ENCODE measurements at regions of chr3 and their contacts with region 1.

Region 1: DNA sequence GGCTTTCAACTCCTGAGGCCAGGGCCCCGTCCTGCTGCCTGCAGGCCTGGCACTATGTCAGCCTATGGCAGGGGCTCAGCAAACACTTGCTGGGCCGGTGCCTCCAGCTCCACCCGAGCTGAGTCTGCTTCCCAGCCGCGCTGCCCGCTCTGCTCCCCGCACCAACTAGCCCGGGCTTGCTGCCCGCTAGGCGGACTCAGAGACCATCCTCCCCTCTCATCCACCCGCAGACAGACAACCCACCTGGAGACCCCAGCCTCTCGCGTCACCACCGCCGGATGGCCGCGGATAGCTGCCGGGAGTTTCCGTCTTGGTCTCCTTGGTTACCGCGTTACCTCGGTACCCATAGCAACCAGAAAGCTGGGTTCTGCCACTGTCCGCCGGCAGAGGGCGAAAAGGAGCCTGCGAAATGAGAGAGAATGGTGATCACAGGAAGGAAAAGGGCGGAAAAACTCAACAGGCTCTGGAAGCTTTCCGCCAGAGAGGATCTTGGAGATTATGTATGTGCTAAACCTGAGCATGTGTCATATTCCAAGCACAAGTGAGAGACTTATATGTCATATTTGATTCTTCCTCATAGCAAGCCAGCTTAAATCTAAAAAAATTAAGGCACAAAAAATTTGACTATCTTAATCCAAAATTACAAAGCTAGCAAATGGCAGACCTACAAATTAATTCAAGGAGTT is at the start of gene ZBBX:
- DNase-seq: peak; percentile 95
- ATAC-seq: peak; percentile 99
- H3K4me3 Mint-ChIP-seq: peak within 1 kb of the TSS; percentile 83
- H3K27ac Mint-ChIP-seq: 0 out of 2 replicates have a peak within 1 kb of the TSS, but pooled peaks have one; percentile 78
- H3K4me1 Mint-ChIP-seq: peaks cover 10% of the 10 kb centered on the region
- H3K27me3 Mint-ChIP-seq: no peaks in the 10 kb centered on the region
- CTCF ChIP-seq: peak; percentile 75
- total RNA-seq, gene ZBBX: 1.1 to 1.9 TPM (median 1.4 TPM) in 3 replicates

Region 2: GRCh38 chr3:167394003-167394402 is 13.9 kb after region 1 on chr3:
- CTCF ChIA-PET with region 1: interaction called, 29 read pairs
- POLR2A ChIA-PET with region 1: no interaction called
- DNase-seq: no peak
- ATAC-seq: no peak
- H3K4me3 Mint-ChIP-seq: no peak overlapping the region
- H3K27ac Mint-ChIP-seq: no peak overlapping the region
- H3K4me1 Mint-ChIP-seq: peaks cover 23% of the 10 kb centered on the region
- H3K27me3 Mint-ChIP-seq: no peaks in the 10 kb centered on the region
- CTCF ChIP-seq: no peak

Region 3: DNA sequence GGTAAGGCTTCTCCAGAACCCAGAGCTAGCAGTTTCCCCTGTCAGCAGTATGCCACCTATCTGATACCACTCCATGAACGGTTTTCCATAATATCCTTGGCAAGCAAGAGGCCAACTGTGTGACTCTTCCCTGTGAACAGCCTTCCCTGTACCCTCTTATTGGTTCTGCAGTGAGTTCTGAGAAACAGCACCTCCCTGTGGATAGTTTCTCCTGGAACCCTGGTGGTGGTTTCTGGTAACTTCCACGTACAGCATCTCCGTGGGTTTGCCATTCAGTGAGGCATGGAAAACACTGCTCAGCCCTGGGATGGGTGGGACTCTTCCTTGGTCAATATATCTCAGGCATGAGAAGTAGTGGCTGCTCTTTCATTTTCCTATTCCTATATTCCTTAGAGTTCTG is 113.1 kb after region 1 on chr3:
- CTCF ChIA-PET with region 1: interaction called, 20 read pairs
- POLR2A ChIA-PET with region 1: no interaction called
- DNase-seq: peak; percentile 57
- ATAC-seq: peak; percentile 96
- H3K4me3 Mint-ChIP-seq: no peak overlapping the region
- H3K27ac Mint-ChIP-seq: no peak overlapping the region; the same call in 1 of the 2 replicates
- H3K4me1 Mint-ChIP-seq: peaks cover 28% of the 10 kb centered on the region
- H3K27me3 Mint-ChIP-seq: peaks cover 3% of the 10 kb centered on the region
- CTCF ChIP-seq: peak; percentile 38; the same call in 1 of the 2 replicates

Region 4: GRCh38 chr3:167684388-167684993 is 304.3 kb after region 1 on chr3:
- CTCF ChIA-PET with region 1: interaction called, 28 read pairs
- POLR2A ChIA-PET with region 1: no interaction called
- DNase-seq: peak; percentile 23
- ATAC-seq: peak; percentile 82
- H3K4me3 Mint-ChIP-seq: no peak overlapping the region
- H3K27ac Mint-ChIP-seq: no peak overlapping the region
- H3K4me1 Mint-ChIP-seq: peaks cover 12% of the 10 kb centered on the region
- H3K27me3 Mint-ChIP-seq: no peaks in the 10 kb centered on the region
- CTCF ChIP-seq: peak; percentile 70

Region 5: GRCh38 chr3:167734498-167735232 is 354.5 kb after region 1 on chr3 and contains the start of gene PDCD10:
- CTCF ChIA-PET with region 1: interaction called, 33 read pairs
- POLR2A ChIA-PET with region 1: interaction called, 7 read pairs
- DNase-seq: peak; percentile 99
- ATAC-seq: peak; percentile 87
- H3K4me3 Mint-ChIP-seq: no peak within 1 kb of the TSS
- H3K27ac Mint-ChIP-seq: no peak within 1 kb of the TSS
- H3K4me1 Mint-ChIP-seq: peaks cover 49% of the 10 kb centered on the region
- H3K27me3 Mint-ChIP-seq: no peaks in the 10 kb centered on the region
- CTCF ChIP-seq: no peak
- total RNA-seq, gene PDCD10: 58.3 to 60.8 TPM (median 58.5 TPM) in 3 replicates

Region 6: GRCh38 chr3:167740961-167741587 is 360.9 kb after region 1 on chr3:
- CTCF ChIA-PET with region 1: interaction called, 33 read pairs
- POLR2A ChIA-PET with region 1: interaction called, 7 read pairs
- DNase-seq: peak; percentile 49
- ATAC-seq: peak; percentile 100
- H3K4me3 Mint-ChIP-seq: no peak overlapping the region
- H3K27ac Mint-ChIP-seq: no peak overlapping the region
- H3K4me1 Mint-ChIP-seq: peaks cover 23% of the 10 kb centered on the region
- H3K27me3 Mint-ChIP-seq: no peaks in the 10 kb centered on the region
- CTCF ChIP-seq: no peak

Region 7: GRCh38 chr3:167882067-167882667 is 502.0 kb after region 1 on chr3:
- CTCF ChIA-PET with region 1: interaction called, 38 read pairs
- POLR2A ChIA-PET with region 1: no interaction called
- DNase-seq: no peak
- ATAC-seq: peak; percentile 49; the same call in 1 of the 2 replicates
- H3K4me3 Mint-ChIP-seq: no peak overlapping the region
- H3K27ac Mint-ChIP-seq: no peak overlapping the region
- H3K4me1 Mint-ChIP-seq: no peaks in the 10 kb centered on the region
- H3K27me3 Mint-ChIP-seq: no peaks in the 10 kb centered on the region
- CTCF ChIP-seq: peak; percentile 44

Measured in WTC11 (cell line).